ENCODE measurements at regions of chrX and their contacts with region 1.

Region 1: GRCh38 chrX:108020631-108021030 is 24.2 kb upstream of the VSIG1 start:
- DNase-seq: no peak
- H3K4me3 Mint-ChIP-seq: peak overlapping the region; percentile 36
- H3K27ac Mint-ChIP-seq: peak overlapping the region; percentile 72
- H3K4me1 Mint-ChIP-seq: peaks cover 58% of the 10 kb centered on the region
- H3K27me3 Mint-ChIP-seq: no peaks in the 10 kb centered on the region

Region 2: DNA sequence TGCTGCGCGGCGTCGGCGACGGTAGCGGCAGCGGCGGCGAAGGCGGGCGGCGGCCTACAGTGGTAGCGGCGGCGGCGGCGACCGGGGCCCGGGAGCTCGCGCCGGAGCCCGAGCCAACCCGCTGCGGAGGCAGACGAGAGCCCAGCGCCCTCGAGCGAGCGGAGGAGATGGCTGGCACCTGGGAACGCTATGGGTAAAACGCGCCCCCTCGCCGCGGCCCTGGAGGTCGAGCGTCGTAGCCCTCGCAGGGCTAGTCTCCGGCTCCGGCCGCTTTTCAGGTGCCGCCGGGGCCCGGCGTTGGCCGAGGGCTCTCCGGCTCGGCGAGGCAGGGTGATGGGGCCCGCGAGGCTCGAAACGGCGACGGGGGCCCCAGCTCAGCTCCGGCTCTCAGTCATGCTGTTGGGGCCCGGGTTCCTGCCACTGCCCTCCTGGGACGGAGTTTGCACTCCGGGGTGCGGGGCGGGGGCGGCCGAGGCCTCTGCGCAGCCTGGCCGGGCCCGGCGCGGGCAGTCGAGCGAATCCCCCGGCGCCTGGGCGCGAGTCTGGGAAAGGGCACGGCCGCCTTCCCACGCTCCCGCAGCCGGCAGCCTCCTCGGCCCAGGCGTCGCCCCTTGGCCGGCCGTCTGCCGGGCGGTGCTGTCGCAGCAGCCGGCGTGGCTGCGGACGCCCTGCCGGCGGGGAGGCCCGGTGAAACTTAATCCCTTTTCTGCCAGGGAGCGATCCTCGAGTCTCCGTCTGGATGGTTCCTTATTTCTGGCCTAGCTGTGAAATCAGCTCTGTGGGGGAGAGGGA is 194.2 kb before region 1 on chrX:
- CTCF ChIA-PET with region 1: no interaction called
- intact Hi-C with region 1: loop called (anchors 5 kb)
- DNase-seq: peak; percentile 14
- H3K4me3 Mint-ChIP-seq: peak overlapping the region; percentile 77
- H3K27ac Mint-ChIP-seq: peak overlapping the region; percentile 73
- H3K4me1 Mint-ChIP-seq: peaks cover 53% of the 10 kb centered on the region
- H3K27me3 Mint-ChIP-seq: no peaks in the 10 kb centered on the region

Region 3: GRCh38 chrX:108036298-108036973 is 15.8 kb after region 1 on chrX:
- CTCF ChIA-PET with region 1: interaction called, 4 read pairs
- intact Hi-C with region 1: loop called (anchors 2 kb)
- DNase-seq: no peak
- H3K4me3 Mint-ChIP-seq: no peak overlapping the region
- H3K27ac Mint-ChIP-seq: no peak overlapping the region
- H3K4me1 Mint-ChIP-seq: peaks cover 53% of the 10 kb centered on the region
- H3K27me3 Mint-ChIP-seq: no peaks in the 10 kb centered on the region

Region 4: DNA sequence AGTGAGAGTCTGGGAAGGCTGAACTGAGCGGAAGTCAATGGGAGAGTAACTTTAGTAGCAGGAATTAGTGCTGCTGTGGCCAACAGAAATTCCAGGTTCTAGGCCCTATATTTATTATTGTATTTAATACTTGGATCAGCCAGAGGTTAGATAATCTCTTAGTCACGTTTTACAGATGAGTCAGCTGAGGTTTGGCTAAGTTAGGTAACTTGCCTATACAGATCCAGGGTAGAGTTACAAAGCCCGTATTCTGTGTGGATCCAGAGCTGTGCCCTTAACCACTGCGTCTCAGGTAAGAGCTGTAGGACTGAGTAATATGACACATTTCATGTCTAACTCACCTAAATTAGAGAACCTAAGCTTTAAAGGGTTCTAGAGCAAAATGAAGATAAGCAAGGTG is 50.3 kb after region 1 on chrX:
- CTCF ChIA-PET with region 1: interaction called, 28 read pairs
- intact Hi-C with region 1: loop called (anchors 1 kb)
- DNase-seq: no peak
- H3K4me3 Mint-ChIP-seq: no peak overlapping the region
- H3K27ac Mint-ChIP-seq: no peak overlapping the region
- H3K4me1 Mint-ChIP-seq: peaks cover 7% of the 10 kb centered on the region
- H3K27me3 Mint-ChIP-seq: no peaks in the 10 kb centered on the region

Region 5: DNA sequence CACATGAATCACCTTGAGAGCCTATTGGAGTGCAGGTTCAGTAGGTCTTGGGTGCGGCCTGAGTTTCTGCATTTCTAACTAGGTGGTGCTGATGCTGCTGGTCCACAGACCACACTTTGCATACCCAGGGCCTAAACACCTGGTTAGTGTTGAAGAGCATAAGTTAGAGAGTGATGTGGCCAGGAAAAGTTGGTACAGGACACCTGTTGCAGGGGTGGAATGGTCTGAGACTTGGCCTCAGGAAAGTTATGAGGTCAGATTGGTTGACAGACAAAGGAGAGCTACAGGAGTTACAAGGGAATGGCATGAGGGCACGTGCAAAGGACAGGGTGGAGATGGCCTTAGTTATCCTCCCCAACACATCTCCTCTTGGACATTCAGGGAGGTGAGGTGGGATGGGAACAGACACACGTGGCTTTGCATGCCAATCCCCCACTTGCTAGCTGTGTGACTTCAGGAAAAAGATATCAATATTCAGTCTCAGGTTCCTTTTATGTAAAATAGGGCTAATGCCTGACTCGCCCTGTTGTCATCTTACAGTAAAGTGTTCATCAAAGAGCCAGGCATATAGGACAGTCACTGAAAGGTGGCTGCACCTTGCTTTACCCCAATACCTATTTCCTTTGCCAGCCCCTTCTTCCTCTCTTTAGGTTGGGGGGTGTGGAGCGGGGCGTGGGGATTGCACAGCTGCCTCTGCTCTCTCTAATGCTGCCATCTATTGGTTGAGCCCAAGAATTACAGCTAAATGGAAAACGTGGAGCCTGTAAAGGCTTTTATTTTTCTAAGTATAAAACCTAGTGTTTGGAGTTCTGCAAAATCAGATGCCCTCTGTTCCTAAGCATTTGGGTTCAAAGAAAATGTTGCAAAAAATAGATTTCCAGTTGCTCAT is 118.4 kb after region 1 on chrX:
- CTCF ChIA-PET with region 1: no interaction called
- intact Hi-C with region 1: loop called (anchors 1 kb)
- DNase-seq: no peak
- H3K4me3 Mint-ChIP-seq: no peak overlapping the region
- H3K27ac Mint-ChIP-seq: no peak overlapping the region
- H3K4me1 Mint-ChIP-seq: no peaks in the 10 kb centered on the region
- H3K27me3 Mint-ChIP-seq: no peaks in the 10 kb centered on the region

Region 6: GRCh38 chrX:108211301-108211700 is 190.7 kb after region 1 on chrX:
- CTCF ChIA-PET with region 1: no interaction called
- intact Hi-C with region 1: no loop called
- DNase-seq: no peak
- H3K4me3 Mint-ChIP-seq: no peak overlapping the region
- H3K27ac Mint-ChIP-seq: no peak overlapping the region
- H3K4me1 Mint-ChIP-seq: no peaks in the 10 kb centered on the region
- H3K27me3 Mint-ChIP-seq: no peaks in the 10 kb centered on the region

Region 7: DNA sequence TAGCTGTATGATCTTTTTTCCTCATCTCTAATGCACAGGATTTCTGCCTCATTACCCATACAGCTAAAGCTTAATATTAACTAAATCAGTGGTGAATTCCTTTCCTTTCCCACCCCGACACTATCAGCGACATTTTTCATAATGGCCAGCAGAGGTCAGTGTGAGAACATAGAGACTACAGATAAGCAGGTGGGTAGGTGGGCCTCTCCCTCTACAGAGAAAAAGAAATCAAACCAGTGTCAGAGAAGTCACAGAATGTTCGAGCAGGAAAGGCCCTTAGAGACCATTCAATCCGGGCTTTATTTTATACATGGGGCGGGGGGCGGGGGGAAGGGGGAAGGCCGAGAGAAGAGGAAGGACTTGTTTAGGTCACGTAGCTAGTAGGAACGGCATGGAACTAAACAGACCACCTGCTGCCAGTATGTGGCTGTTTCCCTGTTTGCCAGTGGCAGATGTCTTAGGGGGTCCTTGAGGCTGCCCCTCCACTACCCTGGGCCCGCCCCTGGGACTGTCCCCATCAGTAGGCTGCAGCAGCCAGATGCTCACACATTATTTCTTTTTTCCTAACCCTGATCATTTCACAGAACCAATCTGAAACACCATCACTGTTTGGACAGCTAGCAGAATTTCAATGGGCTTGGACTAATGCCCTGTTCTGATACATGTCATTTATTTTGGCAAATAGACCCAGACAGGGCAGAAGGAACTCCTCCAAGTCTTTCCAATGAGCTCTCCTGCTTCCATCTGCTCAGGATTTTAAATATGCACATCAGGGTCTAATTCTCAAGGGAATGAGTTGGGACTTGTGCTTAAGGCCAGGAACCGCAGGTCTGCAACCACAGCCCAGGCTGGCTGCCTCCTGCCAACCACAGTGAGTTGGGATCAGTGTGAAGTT is 204.3 kb after region 1 on chrX:
- CTCF ChIA-PET with region 1: no interaction called
- intact Hi-C with region 1: no loop called
- DNase-seq: no peak
- H3K4me3 Mint-ChIP-seq: no peak overlapping the region
- H3K27ac Mint-ChIP-seq: no peak overlapping the region
- H3K4me1 Mint-ChIP-seq: peaks cover 3% of the 10 kb centered on the region
- H3K27me3 Mint-ChIP-seq: no peaks in the 10 kb centered on the region

Measured in activated naive CD4-positive, alpha-beta T cell treated with anti-CD3 and anti-CD28 coated beads for 36 hours (primary cell).